Activated CD4-positive, alpha-beta T cell treated with anti-CD3 and anti-CD28 coated beads for 36 hours (primary cell): ENCODE measurements at regions of chr11 and their contacts with region 1.

Region 1: DNA sequence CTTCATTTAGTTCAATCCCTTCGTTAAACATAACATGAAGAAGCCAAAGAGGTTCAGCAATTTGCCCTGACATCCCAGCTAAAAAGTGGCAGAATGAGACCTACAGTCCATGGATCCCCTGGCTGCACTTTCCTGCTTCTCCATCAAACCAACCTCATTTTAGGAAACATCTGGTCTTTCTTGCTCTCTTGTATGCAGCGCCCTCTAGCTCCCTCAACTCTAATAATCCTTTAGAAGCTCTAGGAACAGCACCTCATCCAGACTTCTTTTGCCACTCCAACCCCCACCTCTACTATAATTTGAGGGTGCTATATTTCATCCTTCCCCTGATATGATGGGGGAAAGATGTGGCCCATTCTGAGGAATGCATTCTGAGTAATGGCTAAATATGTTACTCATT is 7.4 kb downstream of the CNTF start:
- DNase-seq: peak; percentile 38
- ATAC-seq: no peak
- H3K4me3 Mint-ChIP-seq: no peak overlapping the region
- H3K27ac Mint-ChIP-seq: no peak overlapping the region
- H3K4me1 Mint-ChIP-seq: peaks cover 9% of the 10 kb centered on the region
- H3K27me3 Mint-ChIP-seq: no peaks in the 10 kb centered on the region

Region 2: DNA sequence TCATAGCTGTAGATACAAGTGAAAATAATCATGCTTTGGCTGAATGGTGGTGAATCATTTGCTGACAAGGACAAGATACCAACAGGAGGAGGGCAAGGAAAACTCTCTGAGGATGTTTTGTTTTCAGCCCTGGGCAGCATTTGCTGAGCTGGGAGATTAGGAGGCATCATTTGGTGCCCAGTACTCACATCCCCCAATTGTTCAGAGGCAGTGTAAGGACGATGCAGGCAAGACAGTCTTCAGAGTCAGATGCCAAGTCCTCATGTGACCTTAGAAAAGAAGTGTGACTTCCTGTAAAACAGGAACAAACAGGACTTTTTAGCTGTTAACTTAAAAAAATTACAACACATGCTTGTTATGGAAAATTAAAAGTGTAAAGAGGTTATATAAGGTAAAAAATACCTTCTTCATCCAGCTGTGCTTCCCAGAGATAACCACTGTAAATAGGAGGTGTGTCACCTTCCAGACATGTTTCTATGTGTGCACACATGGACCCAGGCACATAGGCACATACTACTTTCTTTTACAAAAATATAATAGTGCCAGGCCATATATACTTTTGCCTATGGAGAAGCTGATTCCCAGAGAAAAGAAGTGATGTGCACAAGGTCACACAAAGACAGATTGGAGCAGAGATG is 10.6 kb after region 1 on chr11:
- CTCF ChIA-PET with region 1: interaction called, 34 read pairs
- POLR2A ChIA-PET with region 1: no interaction called
- intact Hi-C with region 1: no loop called
- DNase-seq: no peak
- ATAC-seq: peak; percentile 79
- H3K4me3 Mint-ChIP-seq: no peak overlapping the region
- H3K27ac Mint-ChIP-seq: peak overlapping the region; percentile 52
- H3K4me1 Mint-ChIP-seq: peaks cover 26% of the 10 kb centered on the region
- H3K27me3 Mint-ChIP-seq: peaks cover 2% of the 10 kb centered on the region